Caco-2 (cell line): ENCODE measurements at regions of chr3 and their contacts with region 1.

Region 1: GRCh38 chr3:107574650-107575049 is 51.9 kb downstream of the BBX start:
- DNase-seq: peak in 1 of 2 experiments; percentile 21
- H3K4me3 ChIP-seq: no peak overlapping the region
- H3K4me3 Mint-ChIP-seq: no peak overlapping the region
- H3K27ac Mint-ChIP-seq: no peak overlapping the region
- H3K4me1 ChIP-seq: no peaks in the 10 kb centered on the region
- H3K4me1 Mint-ChIP-seq: no peaks in the 10 kb centered on the region
- H3K27me3 ChIP-seq: no peaks in the 10 kb centered on the region; the same call in 1 of the 2 replicates
- H3K27me3 Mint-ChIP-seq: peaks cover 15% of the 10 kb centered on the region
- CTCF ChIP-seq: peak; percentile 33 to 36

Region 2: DNA sequence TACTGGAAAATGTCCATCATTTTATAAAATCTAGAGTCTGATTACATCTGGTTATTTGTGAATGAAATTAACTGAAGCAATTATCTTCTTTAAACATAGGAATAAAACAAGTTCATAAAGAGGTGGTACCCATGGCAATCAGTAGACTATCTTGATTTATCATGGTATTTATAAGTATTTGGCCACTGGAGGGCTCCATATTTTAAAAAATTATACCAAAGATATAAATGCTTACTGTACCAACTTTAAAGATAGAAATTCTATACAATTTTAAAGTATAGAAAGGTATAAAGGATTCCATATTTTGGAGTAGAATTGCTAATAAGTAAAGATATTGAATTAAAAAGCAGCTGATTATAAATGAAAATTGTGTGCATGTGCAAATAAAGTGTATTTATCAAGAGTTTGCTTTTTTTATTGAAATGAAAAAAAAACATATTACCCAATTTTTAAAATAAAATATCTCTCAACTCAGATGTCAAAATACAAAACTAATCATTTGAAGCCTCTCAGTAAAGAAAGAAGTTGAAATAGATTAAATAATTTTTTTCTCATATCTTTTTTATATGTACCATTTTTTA is 53.4 kb after region 1 on chr3:
- CTCF ChIA-PET with region 1: no interaction called
- POLR2A ChIA-PET with region 1: no interaction called
- intact Hi-C with region 1: loop called (anchors 2 kb)
- DNase-seq: no peak
- H3K4me3 ChIP-seq: no peak overlapping the region
- H3K4me3 Mint-ChIP-seq: no peak overlapping the region
- H3K27ac Mint-ChIP-seq: no peak overlapping the region
- H3K4me1 ChIP-seq: no peaks in the 10 kb centered on the region
- H3K4me1 Mint-ChIP-seq: no peaks in the 10 kb centered on the region
- H3K27me3 ChIP-seq: no peaks in the 10 kb centered on the region
- H3K27me3 Mint-ChIP-seq: no peaks in the 10 kb centered on the region
- CTCF ChIP-seq: no peak

Region 3: GRCh38 chr3:107660306-107660976 is 85.8 kb after region 1 on chr3:
- CTCF ChIA-PET with region 1: no interaction called
- POLR2A ChIA-PET with region 1: no interaction called
- intact Hi-C with region 1: loop called (anchors 2 kb)
- DNase-seq: no peak
- H3K4me3 ChIP-seq: no peak overlapping the region
- H3K4me3 Mint-ChIP-seq: no peak overlapping the region
- H3K27ac Mint-ChIP-seq: no peak overlapping the region
- H3K4me1 ChIP-seq: no peaks in the 10 kb centered on the region
- H3K4me1 Mint-ChIP-seq: peaks cover 5% of the 10 kb centered on the region
- H3K27me3 ChIP-seq: no peaks in the 10 kb centered on the region
- H3K27me3 Mint-ChIP-seq: peaks cover 8% of the 10 kb centered on the region
- CTCF ChIP-seq: peak; percentile 49 to 63

Region 4: GRCh38 chr3:107740992-107741896 is 166.6 kb after region 1 on chr3:
- CTCF ChIA-PET with region 1: no interaction called
- POLR2A ChIA-PET with region 1: no interaction called
- intact Hi-C with region 1: loop called (anchors 1 kb)
- DNase-seq: no peak
- H3K4me3 ChIP-seq: no peak overlapping the region
- H3K4me3 Mint-ChIP-seq: no peak overlapping the region
- H3K27ac Mint-ChIP-seq: no peak overlapping the region
- H3K4me1 ChIP-seq: no peaks in the 10 kb centered on the region
- H3K4me1 Mint-ChIP-seq: no peaks in the 10 kb centered on the region
- H3K27me3 ChIP-seq: no peaks in the 10 kb centered on the region
- H3K27me3 Mint-ChIP-seq: peaks cover 14% of the 10 kb centered on the region
- CTCF ChIP-seq: peak; percentile 41 to 43

Region 5: GRCh38 chr3:107927361-107928083 is 352.9 kb after region 1 on chr3:
- CTCF ChIA-PET with region 1: no interaction called
- POLR2A ChIA-PET with region 1: no interaction called
- intact Hi-C with region 1: loop called (anchors 1 kb)
- DNase-seq: peak; percentile 37 to 64
- H3K4me3 ChIP-seq: peak overlapping the region; percentile 36
- H3K4me3 Mint-ChIP-seq: peak overlapping the region; percentile 74
- H3K27ac Mint-ChIP-seq: no peak overlapping the region
- H3K4me1 ChIP-seq: no peaks in the 10 kb centered on the region
- H3K4me1 Mint-ChIP-seq: peaks cover 5% of the 10 kb centered on the region
- H3K27me3 ChIP-seq: peaks cover 3% of the 10 kb centered on the region; the same call in 1 of the 2 replicates
- H3K27me3 Mint-ChIP-seq: peaks cover 10% of the 10 kb centered on the region
- CTCF ChIP-seq: peak; percentile 78 to 92